ENCODE measurements at regions of chr22 and their contacts with region 1.

Region 1: GRCh38 chr22:18077639-18078328 is at the start of gene PEX26:
- DNase-seq: peak; percentile 93
- H3K4me3 ChIP-seq: peak within 1 kb of the TSS; percentile 83 to 90 (median 86)
- H3K27ac ChIP-seq: peak within 1 kb of the TSS; percentile 56
- H3K4me1 ChIP-seq: peaks cover 21% of the 10 kb centered on the region
- H3K27me3 ChIP-seq: no peaks in the 10 kb centered on the region
- CTCF ChIP-seq: no peak
- POLR2A ChIP-seq: no peak
- total RNA-seq, gene PEX26: 40.9 and 44.4 TPM in 2 replicates

Region 2: GRCh38 chr22:17562906-17563870 is 514.6 kb before region 1 on chr22 and contains the start of gene SLC25A18:
- CTCF ChIA-PET with region 1: interaction called, 26 read pairs
- POLR2A ChIA-PET with region 1: no interaction called
- dilution Hi-C with region 1: no loop called
- intact Hi-C with region 1: loop called (anchors 2 kb)
- DNase-seq: no peak
- H3K4me3 ChIP-seq: no peak within 1 kb of the TSS
- H3K27ac ChIP-seq: no peak within 1 kb of the TSS
- H3K4me1 ChIP-seq: no peaks in the 10 kb centered on the region
- H3K27me3 ChIP-seq: peaks cover 3 to 6% of the 10 kb centered on the region in 2 experiments
- CTCF ChIP-seq: no peak
- POLR2A ChIP-seq: no peak
- total RNA-seq, gene SLC25A18: not detected in 2 replicates

Region 3: DNA sequence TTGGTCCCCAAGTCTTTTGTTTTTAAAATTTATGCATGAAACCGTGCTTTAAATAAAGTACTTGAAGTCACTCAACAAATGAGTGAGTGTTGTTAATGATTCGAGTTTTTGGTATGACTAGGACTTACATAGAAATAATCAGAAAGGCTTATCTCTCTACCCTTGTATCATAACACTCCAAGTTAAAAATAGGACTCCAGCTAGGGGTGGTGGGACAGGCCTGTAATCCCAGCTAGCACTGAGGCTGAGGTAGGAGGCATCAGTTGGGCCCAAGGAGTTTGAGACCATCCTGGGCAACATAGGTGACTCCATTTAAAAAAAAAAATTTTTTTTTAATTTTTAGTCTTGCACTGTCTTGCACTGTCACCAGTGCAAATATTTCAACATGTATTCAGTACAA is 383.6 kb before region 1 on chr22:
- CTCF ChIA-PET with region 1: no interaction called
- POLR2A ChIA-PET with region 1: no interaction called
- dilution Hi-C with region 1: no loop called
- intact Hi-C with region 1: no loop called
- DNase-seq: no peak
- H3K4me3 ChIP-seq: no peak overlapping the region
- H3K27ac ChIP-seq: no peak overlapping the region
- H3K4me1 ChIP-seq: peaks cover 3% of the 10 kb centered on the region
- H3K27me3 ChIP-seq: no peaks in the 10 kb centered on the region
- CTCF ChIP-seq: no peak
- POLR2A ChIP-seq: no peak

Region 4: DNA sequence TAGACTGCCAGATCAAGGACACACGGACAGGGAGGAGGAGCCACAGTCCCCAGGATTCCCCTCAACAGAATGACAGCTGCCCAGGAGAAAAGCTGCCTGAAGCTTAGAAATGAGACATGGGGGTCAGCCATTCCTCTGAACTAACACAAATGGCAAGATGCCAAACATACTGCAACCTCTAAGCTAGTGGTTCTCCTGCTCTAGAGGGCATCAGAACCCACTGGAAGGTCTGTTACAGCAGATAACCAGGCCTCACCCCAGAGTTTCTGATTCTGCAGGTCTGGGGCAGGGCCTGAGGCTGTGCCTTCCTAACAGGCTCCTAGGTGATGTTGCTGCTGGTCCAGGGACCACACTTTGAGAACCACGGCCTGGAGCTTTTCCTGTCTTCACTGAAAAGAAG is 275.0 kb before region 1 on chr22:
- CTCF ChIA-PET with region 1: interaction called, 13 read pairs
- POLR2A ChIA-PET with region 1: no interaction called
- dilution Hi-C with region 1: no loop called
- intact Hi-C with region 1: no loop called
- DNase-seq: no peak
- H3K4me3 ChIP-seq: no peak overlapping the region
- H3K27ac ChIP-seq: no peak overlapping the region
- H3K4me1 ChIP-seq: no peaks in the 10 kb centered on the region
- H3K27me3 ChIP-seq: no peaks in the 10 kb centered on the region
- CTCF ChIP-seq: no peak
- POLR2A ChIP-seq: no peak

Region 5: DNA sequence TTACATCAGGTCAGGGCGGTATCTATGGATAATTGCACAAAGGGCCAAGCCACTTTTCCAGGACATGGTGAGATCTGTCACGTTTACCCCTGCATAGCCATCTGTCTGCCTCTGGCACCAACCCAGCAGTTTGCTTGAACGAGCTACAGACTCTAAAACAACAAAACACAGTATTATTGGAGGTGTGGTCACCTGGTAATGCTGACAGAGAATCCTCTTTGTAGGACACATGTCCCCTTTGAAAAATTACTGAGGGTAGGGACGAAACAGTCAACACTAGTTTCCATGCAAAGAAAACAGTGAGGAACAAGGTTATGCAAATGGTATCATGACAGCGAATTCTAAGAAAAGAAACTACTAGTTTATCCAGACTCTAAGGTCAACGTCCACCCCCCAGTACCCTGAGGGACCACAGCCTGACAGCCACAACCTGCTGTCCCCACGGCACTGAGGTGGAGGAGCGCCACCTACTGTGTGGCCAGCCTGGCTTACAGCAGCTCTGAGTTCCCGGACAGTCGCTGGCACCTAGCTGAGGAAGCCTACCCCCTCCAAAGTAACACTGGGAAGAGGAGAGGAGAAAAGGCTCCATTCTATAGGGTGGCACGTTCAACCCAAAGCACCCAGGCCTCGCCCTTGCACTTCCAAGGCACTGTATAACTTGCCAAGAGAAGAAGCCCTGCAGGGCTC is 186.2 kb before region 1 on chr22:
- CTCF ChIA-PET with region 1: interaction called, 55 read pairs
- POLR2A ChIA-PET with region 1: no interaction called
- dilution Hi-C with region 1: no loop called
- intact Hi-C with region 1: loop called (anchors 2 kb)
- DNase-seq: no peak
- H3K4me3 ChIP-seq: no peak overlapping the region
- H3K27ac ChIP-seq: no peak overlapping the region
- H3K4me1 ChIP-seq: no peaks in the 10 kb centered on the region
- H3K27me3 ChIP-seq: no peaks in the 10 kb centered on the region
- CTCF ChIP-seq: no peak
- POLR2A ChIP-seq: no peak

Region 6: DNA sequence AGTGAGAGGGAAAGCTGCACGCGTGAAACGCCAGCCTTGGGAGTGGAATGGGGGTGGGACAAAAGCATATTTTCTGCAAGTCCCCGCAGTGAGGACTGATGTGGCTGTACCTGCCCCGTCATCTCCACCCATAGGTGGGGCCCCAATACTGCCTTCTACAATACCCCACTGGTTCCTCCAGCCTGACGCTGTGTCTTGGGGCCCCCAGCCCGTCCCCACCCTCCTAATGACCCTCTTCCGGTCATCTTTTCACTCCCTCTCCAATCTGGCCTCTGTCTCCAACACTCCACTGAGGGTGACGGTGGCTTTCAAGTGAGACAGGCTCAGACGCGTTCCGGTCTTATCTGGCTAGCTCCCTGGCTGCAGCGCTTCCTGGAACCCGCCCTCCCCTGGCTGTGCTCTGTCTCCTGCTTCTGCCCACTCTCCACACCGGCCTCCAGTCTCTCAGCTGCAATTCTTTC is 157.6 kb before region 1 on chr22:
- CTCF ChIA-PET with region 1: interaction called, 10 read pairs
- POLR2A ChIA-PET with region 1: no interaction called
- dilution Hi-C with region 1: no loop called
- intact Hi-C with region 1: no loop called
- DNase-seq: peak; percentile 44
- H3K4me3 ChIP-seq: no peak overlapping the region
- H3K27ac ChIP-seq: no peak overlapping the region
- H3K4me1 ChIP-seq: peaks cover 29% of the 10 kb centered on the region
- H3K27me3 ChIP-seq: no peaks in the 10 kb centered on the region
- CTCF ChIP-seq: no peak
- POLR2A ChIP-seq: no peak

Region 7: DNA sequence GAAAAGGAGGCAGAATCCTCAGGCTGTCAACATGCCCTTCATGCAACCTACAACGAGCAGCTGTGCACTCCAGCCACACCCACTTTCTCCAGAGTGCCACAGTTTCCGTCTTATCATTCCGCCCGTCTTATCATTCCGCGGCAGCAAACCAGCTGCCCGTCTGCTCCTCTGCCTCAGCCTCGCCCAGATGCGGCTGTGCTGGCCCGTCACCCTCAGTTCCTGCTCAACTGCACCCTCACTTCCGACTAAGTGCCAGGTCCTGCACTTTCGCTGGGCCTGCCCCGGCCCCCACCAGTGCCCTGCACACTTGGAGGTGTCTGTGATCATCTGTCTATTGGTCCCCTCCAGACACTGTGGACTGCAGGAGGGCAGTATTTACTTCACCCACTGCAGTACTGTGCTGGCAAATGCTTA is 97.1 kb before region 1 on chr22:
- CTCF ChIA-PET with region 1: no interaction called
- POLR2A ChIA-PET with region 1: no interaction called
- dilution Hi-C with region 1: no loop called
- intact Hi-C with region 1: no loop called
- DNase-seq: peak; percentile 58
- H3K4me3 ChIP-seq: no peak overlapping the region
- H3K27ac ChIP-seq: no peak overlapping the region
- H3K4me1 ChIP-seq: peaks cover 23% of the 10 kb centered on the region
- H3K27me3 ChIP-seq: no peaks in the 10 kb centered on the region
- CTCF ChIP-seq: no peak
- POLR2A ChIP-seq: no peak

Region 8: GRCh38 chr22:18056161-18056666 is 21.6 kb before region 1 on chr22:
- CTCF ChIA-PET with region 1: interaction called, 19 read pairs
- POLR2A ChIA-PET with region 1: no interaction called
- dilution Hi-C with region 1: no loop called
- intact Hi-C with region 1: no loop called
- DNase-seq: peak; percentile 41
- H3K4me3 ChIP-seq: no peak overlapping the region
- H3K27ac ChIP-seq: no peak overlapping the region
- H3K4me1 ChIP-seq: peaks cover 16% of the 10 kb centered on the region
- H3K27me3 ChIP-seq: peaks cover 0 to 2% of the 10 kb centered on the region in 2 experiments
- CTCF ChIP-seq: no peak
- POLR2A ChIP-seq: no peak

Region 9: GRCh38 chr22:18116634-18117033 is 38.9 kb after region 1 on chr22:
- CTCF ChIA-PET with region 1: no interaction called
- POLR2A ChIA-PET with region 1: no interaction called
- dilution Hi-C with region 1: no loop called
- intact Hi-C with region 1: no loop called
- DNase-seq: no peak
- H3K4me3 ChIP-seq: no peak overlapping the region
- H3K27ac ChIP-seq: no peak overlapping the region
- H3K4me1 ChIP-seq: peaks cover 12% of the 10 kb centered on the region
- H3K27me3 ChIP-seq: no peaks in the 10 kb centered on the region
- CTCF ChIP-seq: no peak
- POLR2A ChIP-seq: no peak

Region 10: GRCh38 chr22:18156850-18157713 is 79.3 kb after region 1 on chr22:
- CTCF ChIA-PET with region 1: interaction called, 10 read pairs
- POLR2A ChIA-PET with region 1: no interaction called
- dilution Hi-C with region 1: no loop called
- intact Hi-C with region 1: no loop called
- DNase-seq: peak; percentile 83
- H3K4me3 ChIP-seq: no peak overlapping the region
- H3K27ac ChIP-seq: peak overlapping the region; percentile 61
- H3K4me1 ChIP-seq: peaks cover 22% of the 10 kb centered on the region
- H3K27me3 ChIP-seq: no peaks in the 10 kb centered on the region
- CTCF ChIP-seq: peak; percentile 77 to 84
- POLR2A ChIP-seq: no peak

Region 11: DNA sequence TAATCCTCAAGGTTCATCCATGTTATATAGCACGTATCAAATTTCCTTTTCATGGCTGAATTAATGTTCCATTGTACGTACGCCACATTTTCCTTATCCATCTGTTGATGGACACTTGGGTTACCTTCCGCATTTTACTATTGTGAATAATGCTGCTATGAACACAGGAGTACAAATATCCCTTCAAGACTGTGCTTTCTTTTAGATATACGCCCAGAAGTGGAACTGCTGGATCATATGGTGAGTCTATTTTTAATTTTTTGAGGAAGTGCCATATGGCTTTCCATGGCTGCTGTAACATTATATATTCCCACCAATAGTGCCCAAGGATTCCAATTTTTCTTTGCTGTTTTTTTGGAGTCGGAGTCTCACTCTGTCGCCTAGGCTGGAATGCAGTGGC is 1360.5 kb after region 1 on chr22:
- CTCF ChIA-PET with region 1: no interaction called
- POLR2A ChIA-PET with region 1: no interaction called
- dilution Hi-C with region 1: no loop called
- intact Hi-C with region 1: no loop called
- DNase-seq: no peak
- H3K4me3 ChIP-seq: no peak overlapping the region
- H3K27ac ChIP-seq: no peak overlapping the region
- H3K4me1 ChIP-seq: peaks cover 3% of the 10 kb centered on the region
- H3K27me3 ChIP-seq: no peaks in the 10 kb centered on the region
- CTCF ChIP-seq: no peak
- POLR2A ChIP-seq: no peak

Measured in endothelial cell of umbilical vein (primary cell).